ENCODE measurements at regions of chr14 and their contacts with region 1.

Region 1: DNA sequence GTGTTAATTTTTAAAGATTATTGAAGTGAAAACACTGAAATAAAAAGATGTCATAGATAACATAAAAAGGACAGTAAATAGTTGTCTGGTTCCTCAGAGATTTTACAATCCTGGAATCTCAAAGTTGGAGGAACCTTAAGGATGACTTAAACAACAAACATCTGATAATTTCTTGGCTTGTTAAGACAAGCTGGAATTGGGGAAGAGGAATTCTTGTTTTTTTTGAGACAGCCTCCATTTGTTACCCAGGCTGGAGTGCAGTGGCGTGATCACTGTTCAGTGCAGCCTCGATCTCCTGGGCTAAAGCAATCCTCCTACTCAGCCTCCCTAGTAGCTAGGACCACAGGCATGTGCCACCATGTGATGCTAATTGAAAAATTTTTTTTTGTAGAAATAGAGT is 2.3 kb downstream of the ZNF410 start:
- DNase-seq: no peak
- ATAC-seq: no peak
- H3K4me3 ChIP-seq: no peak overlapping the region
- H3K4me3 Mint-ChIP-seq: peak overlapping the region; percentile 92 to 99 (median 99)
- H3K27ac ChIP-seq: peak overlapping the region; percentile 93
- H3K27ac Mint-ChIP-seq: peak overlapping the region; percentile 96 to 99
- H3K4me1 ChIP-seq: peaks cover 12 to 17% of the 10 kb centered on the region in 2 experiments
- H3K4me1 Mint-ChIP-seq: peaks cover 52 to 58% (median 56%) of the 10 kb centered on the region in 3 donors
- H3K27me3 ChIP-seq: no peaks in the 10 kb centered on the region
- H3K27me3 Mint-ChIP-seq: no peaks in the 10 kb centered on the region

Region 2: GRCh38 chr14:73833530-73834257 is 55.3 kb before region 1 on chr14:
- CTCF ChIA-PET with region 1: interaction called in 1 of 2 experiments, 3 read pairs
- POLR2A ChIA-PET with region 1: interaction called in 1 of 2 experiments, 11 read pairs
- DNase-seq: no peak
- ATAC-seq: no peak
- H3K4me3 ChIP-seq: no peak overlapping the region
- H3K4me3 Mint-ChIP-seq: no peak overlapping the region
- H3K27ac ChIP-seq: no peak overlapping the region
- H3K27ac Mint-ChIP-seq: no peak overlapping the region
- H3K4me1 ChIP-seq: no peaks in the 10 kb centered on the region
- H3K4me1 Mint-ChIP-seq: peaks cover 0 to 8% (median 5%) of the 10 kb centered on the region in 3 donors
- H3K27me3 ChIP-seq: peaks cover 0 to 2% of the 10 kb centered on the region in 2 experiments
- H3K27me3 Mint-ChIP-seq: no peaks in the 10 kb centered on the region